A549 (cell line): ENCODE measurements at regions of chr12 and their contacts with region 1.

Region 1: GRCh38 chr12:48814262-48815125 is 3.8 kb upstream of the CACNB3 start:
- DNase-seq: peak; percentile 82 to 87
- ATAC-seq: peak; percentile 69 to 84
- H3K4me3 ChIP-seq: peak overlapping the region; percentile 81
- H3K27ac ChIP-seq: peak overlapping the region; percentile 93 to 95
- H3K4me1 ChIP-seq: peaks cover 48% of the 10 kb centered on the region
- CTCF ChIP-seq: peak; percentile 99
- EP300 ChIP-seq: no peak
- POLR2A ChIP-seq: peak; percentile 46
- RAD21 ChIP-seq: peak; percentile 43 to 62; a peak in 4 of 5 replicates

Region 2: DNA sequence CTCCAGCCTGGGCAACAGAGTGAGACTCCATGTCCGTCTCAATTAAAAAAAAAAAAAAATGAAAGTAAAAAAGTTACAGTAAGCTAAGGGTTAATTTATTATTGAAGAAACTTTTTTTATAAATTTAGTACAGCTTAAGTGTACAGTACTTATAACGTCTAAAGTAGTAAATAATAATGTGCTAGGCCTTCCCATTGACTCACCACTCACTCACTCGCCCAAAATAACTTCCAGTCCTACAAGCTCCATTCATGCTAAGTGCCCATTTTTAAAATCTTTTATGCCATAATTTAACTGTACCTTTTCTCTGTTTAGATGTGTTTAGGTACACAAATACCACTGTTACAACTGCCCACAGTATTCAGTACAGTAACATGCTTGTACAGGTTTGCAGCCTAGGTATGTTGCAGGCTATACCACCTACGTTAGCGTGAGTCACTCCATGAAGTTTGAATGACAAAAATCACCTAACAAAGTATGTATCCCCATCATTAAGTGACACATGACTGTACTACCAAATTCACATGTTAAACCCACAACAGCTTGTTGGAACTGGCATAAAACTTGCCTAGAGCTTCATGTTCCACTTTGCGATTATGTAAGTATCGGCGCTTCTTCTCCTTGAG is 143.2 kb before region 1 on chr12:
- CTCF ChIA-PET with region 1: interaction called, 10 read pairs
- POLR2A ChIA-PET with region 1: no interaction called
- DNase-seq: no peak
- ATAC-seq: peak in 1 of 2 experiments; percentile 42; a peak in 2 of 6 replicates
- H3K4me3 ChIP-seq: no peak overlapping the region
- H3K27ac ChIP-seq: no peak overlapping the region
- H3K4me1 ChIP-seq: no peaks in the 10 kb centered on the region
- CTCF ChIP-seq: no peak
- EP300 ChIP-seq: no peak
- POLR2A ChIP-seq: no peak
- RAD21 ChIP-seq: no peak

Region 3: DNA sequence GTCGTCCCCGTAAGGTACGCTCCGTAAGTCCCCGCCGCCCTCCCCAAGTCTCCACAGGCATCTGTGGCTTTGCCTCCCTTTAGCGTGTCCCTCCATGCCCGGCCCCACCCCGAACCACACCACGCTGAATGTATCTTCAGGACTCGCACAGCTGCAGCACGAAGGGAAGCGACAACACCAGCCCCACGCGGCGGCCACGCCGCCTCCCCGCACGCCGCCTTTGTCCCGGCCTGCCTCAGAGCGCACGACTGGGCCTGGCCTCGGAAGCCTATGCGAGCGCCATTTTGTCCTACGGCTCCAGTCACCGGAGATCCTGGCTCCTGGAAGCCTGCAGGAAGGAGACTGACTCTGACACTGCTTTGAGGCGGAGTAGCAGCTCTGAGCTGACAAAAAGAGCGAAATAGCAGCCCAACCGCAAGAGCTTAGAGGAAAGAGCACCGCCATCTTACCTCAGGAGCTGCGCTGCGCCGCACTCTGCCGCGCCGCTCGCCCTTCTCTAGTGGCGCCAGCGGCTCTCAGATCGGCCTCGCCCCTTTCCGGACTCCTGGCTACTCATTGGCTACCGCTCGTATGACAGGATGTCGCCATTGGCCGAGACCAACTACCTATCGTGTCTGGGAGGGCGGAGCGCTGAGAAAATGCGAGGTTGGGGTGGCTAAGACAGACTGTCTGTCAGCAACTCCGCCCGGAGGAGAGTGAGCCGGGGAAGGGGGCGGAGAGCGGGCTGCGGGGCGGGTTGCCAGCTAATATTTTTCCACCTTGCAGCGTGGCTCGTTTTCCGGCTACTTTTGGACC is 132.6 kb before region 1 on chr12 and contains the start of gene KANSL2:
- CTCF ChIA-PET with region 1: interaction called, 10 read pairs
- POLR2A ChIA-PET with region 1: no interaction called
- DNase-seq: peak; percentile 99
- ATAC-seq: peak; percentile 98
- H3K4me3 ChIP-seq: peak within 1 kb of the TSS; percentile 58
- H3K27ac ChIP-seq: peak within 1 kb of the TSS; percentile 93 to 98
- H3K4me1 ChIP-seq: peaks cover 32% of the 10 kb centered on the region
- CTCF ChIP-seq: no peak
- EP300 ChIP-seq: no peak
- POLR2A ChIP-seq: peak; percentile 98
- RAD21 ChIP-seq: no peak
- polyA plus RNA-seq, gene KANSL2: 59.4 and 62.8 TPM in 2 replicates

Region 4: DNA sequence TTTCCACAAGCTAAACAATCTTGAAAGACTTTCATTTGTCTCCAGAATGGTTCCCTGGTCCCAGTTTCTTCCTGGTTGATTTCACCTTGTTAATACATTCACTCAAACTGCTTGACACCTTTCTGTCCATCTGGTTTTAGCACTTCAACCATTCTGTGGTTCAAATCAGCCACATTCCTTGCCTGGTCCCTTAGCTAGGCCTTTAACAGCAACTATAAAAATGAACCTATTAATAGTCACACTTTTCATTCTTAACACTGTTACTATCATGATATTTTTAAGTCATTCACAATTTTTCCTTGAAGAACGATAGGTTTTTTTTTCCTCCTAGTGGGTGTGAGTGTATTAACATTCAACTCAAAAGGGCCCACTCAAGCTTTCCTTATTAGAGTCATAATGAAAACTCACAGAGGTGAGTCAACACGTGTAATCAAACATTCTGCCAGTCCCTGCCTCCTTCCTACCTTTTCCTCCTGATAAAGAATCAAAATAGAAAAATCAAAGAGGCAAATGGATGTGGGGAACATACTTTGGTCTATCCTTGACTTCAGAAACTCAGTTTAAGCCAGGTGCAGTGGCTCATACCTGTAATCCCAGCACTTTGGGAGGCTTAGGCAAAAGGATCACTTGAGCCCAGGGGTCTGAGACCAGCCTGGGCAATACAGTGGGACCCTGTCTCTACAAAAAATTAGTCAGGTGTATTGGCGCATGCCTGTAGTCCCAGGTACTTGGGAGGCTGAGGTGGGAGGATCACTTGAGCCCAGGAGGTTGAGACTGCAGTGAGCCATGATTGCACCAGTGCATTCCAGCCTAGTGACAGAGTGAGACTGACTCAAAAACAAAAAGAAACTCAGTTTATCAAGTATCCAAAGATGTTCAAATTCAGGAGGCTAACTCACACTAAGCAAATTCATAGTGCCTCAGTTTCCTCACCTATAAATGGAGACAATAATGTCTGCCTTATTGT is 63.4 kb before region 1 on chr12:
- CTCF ChIA-PET with region 1: interaction called, 46 read pairs
- POLR2A ChIA-PET with region 1: no interaction called
- DNase-seq: no peak
- ATAC-seq: no peak
- H3K4me3 ChIP-seq: no peak overlapping the region
- H3K27ac ChIP-seq: no peak overlapping the region
- H3K4me1 ChIP-seq: no peaks in the 10 kb centered on the region
- CTCF ChIP-seq: no peak
- EP300 ChIP-seq: no peak
- POLR2A ChIP-seq: no peak
- RAD21 ChIP-seq: no peak

Region 5: GRCh38 chr12:48758221-48758620 is 56.3 kb before region 1 on chr12:
- CTCF ChIA-PET with region 1: interaction called, 46 read pairs
- POLR2A ChIA-PET with region 1: no interaction called
- DNase-seq: peak in 1 of 2 experiments; percentile 29
- ATAC-seq: peak; percentile 57 to 64; a peak in 4 of 6 replicates
- H3K4me3 ChIP-seq: no peak overlapping the region
- H3K27ac ChIP-seq: no peak overlapping the region
- H3K4me1 ChIP-seq: no peaks in the 10 kb centered on the region
- CTCF ChIP-seq: no peak
- EP300 ChIP-seq: no peak
- POLR2A ChIP-seq: no peak
- RAD21 ChIP-seq: no peak

Region 6: DNA sequence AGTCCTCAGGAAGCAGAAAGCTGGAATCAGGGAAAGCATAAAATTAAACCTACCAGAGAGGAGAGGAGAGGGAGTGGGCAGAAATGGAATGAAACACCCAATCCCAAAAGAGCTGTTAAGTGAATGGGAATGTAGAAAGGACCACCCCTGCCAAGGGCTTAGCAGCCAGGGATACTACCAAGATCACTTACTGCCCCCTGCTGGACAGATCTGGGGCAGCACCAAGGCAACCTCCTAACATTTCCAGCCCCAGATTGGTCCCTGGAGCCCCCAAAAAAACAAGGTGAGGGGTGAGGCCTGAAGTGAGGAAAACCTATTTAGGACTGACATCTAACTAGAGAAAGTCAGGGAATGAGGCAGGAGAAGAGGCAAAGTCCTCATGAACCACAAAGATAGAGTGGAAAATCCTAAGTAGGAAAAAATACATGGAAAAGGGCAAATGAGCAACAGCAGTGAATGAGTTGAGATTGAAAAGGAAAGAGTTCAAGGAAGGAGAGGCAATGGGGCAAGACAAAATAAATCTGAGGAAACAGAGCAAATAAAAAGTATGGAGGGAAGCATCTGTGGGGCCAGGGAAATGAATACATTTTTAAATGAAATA is 122.0 kb after region 1 on chr12:
- CTCF ChIA-PET with region 1: interaction called, 11 read pairs
- POLR2A ChIA-PET with region 1: no interaction called
- DNase-seq: peak; percentile 72 to 95
- ATAC-seq: peak; percentile 87 to 91
- H3K4me3 ChIP-seq: no peak overlapping the region
- H3K27ac ChIP-seq: no peak overlapping the region
- H3K4me1 ChIP-seq: no peaks in the 10 kb centered on the region
- CTCF ChIP-seq: peak; percentile 88
- EP300 ChIP-seq: no peak
- POLR2A ChIP-seq: no peak
- RAD21 ChIP-seq: peak; percentile 68 to 70

Region 7: GRCh38 chr12:48977315-48978281 is 163.1 kb after region 1 on chr12:
- CTCF ChIA-PET with region 1: interaction called, 12 read pairs
- POLR2A ChIA-PET with region 1: no interaction called
- DNase-seq: peak; percentile 64 to 74
- ATAC-seq: peak; percentile 69 to 85
- H3K4me3 ChIP-seq: peak overlapping the region; percentile 42; the same call in 2 of the 3 replicates
- H3K27ac ChIP-seq: 0 out of 6 replicates have a peak overlapping the region, but pooled peaks of 1 of the 2 experiments have one; percentile 31
- H3K4me1 ChIP-seq: peaks cover 16% of the 10 kb centered on the region; the same call in 2 of the 3 replicates
- CTCF ChIP-seq: peak; percentile 70
- EP300 ChIP-seq: no peak
- POLR2A ChIP-seq: no peak
- RAD21 ChIP-seq: peak in 1 of 2 experiments; percentile 39; a peak in 3 of 5 replicates

Region 8: DNA sequence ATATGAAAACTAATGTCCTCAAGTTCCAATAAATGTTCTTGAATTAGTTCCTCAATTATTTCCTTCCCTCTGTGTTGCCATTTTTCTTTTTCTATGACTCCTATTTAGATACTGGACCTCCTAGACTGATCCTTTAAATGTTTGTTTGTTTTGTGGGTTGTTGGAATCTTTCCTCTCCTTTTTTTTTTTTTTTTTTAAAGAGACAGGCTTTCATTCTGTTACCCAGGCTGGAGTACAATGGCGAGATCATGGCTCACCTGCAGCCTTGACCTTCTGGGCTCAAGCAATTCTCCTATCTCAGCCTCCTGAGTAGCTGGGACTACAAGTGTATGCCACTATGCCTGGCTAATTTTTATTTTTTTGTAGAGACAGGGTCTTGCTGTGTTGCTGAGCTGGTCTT is 194.4 kb after region 1 on chr12:
- CTCF ChIA-PET with region 1: no interaction called
- POLR2A ChIA-PET with region 1: no interaction called
- DNase-seq: no peak
- ATAC-seq: peak in 1 of 2 experiments; percentile 56; a peak in 3 of 6 replicates
- H3K4me3 ChIP-seq: no peak overlapping the region
- H3K27ac ChIP-seq: no peak overlapping the region
- H3K4me1 ChIP-seq: peaks cover 15% of the 10 kb centered on the region
- CTCF ChIP-seq: no peak
- EP300 ChIP-seq: no peak
- POLR2A ChIP-seq: no peak
- RAD21 ChIP-seq: no peak